CD4-positive, alpha-beta memory T cell (primary cell): ENCODE measurements at regions of chr11 and their contacts with region 1.

Region 1: GRCh38 chr11:73876424-73877300 is at the starts of genes COA4 and PAAF1:
- DNase-seq: peak; percentile 93 to 97 (median 94)
- H3K4me3 ChIP-seq: peak within 1 kb of the TSS; percentile 85 to 90
- H3K4me3 Mint-ChIP-seq: peak within 1 kb of the TSS; percentile 98 to 100 (median 100)
- H3K27ac ChIP-seq: peak within 1 kb of the TSS; percentile 86
- H3K27ac Mint-ChIP-seq: peak within 1 kb of the TSS; percentile 95 to 100 (median 99)
- H3K4me1 ChIP-seq: peaks cover 32% of the 10 kb centered on the region
- H3K4me1 Mint-ChIP-seq: peaks cover 16 to 50% (median 31%) of the 10 kb centered on the region in 4 donors
- H3K27me3 ChIP-seq: no peaks in the 10 kb centered on the region
- H3K27me3 Mint-ChIP-seq: no peaks in the 10 kb centered on the region
- total RNA-seq, gene COA4: 59.0 to 61.4 TPM
- total RNA-seq, gene PAAF1: 18.8 to 19.1 TPM

Region 2: DNA sequence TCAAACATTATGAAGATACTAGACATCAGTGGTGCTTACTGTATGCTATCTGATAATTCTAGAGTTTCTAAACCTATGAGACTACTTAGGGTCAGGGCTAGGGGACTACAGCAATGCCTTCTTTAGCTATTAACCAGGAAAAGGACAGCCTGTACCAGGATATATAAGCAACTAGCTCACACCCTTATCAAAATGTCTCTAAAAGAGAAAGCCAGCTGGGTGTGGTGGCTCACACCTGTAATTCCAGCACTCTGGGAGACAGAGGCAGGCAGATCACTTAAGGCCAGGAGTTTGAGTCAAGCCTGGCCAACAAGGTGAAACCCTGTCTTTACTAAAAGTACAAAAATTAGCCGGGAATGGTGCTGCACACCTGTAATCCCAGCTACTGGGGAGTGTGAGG is 171.6 kb before region 1 on chr11:
- CTCF ChIA-PET with region 1: no interaction called
- POLR2A ChIA-PET with region 1: no interaction called
- intact Hi-C with region 1: no loop called
- DNase-seq: no peak
- H3K4me3 ChIP-seq: no peak overlapping the region
- H3K4me3 Mint-ChIP-seq: no peak overlapping the region
- H3K27ac ChIP-seq: no peak overlapping the region
- H3K27ac Mint-ChIP-seq: no peak overlapping the region
- H3K4me1 ChIP-seq: no peaks in the 10 kb centered on the region
- H3K4me1 Mint-ChIP-seq: peaks cover 0 to 3% (median under 1%) of the 10 kb centered on the region in 4 donors
- H3K27me3 ChIP-seq: no peaks in the 10 kb centered on the region
- H3K27me3 Mint-ChIP-seq: no peaks in the 10 kb centered on the region

Region 3: GRCh38 chr11:73779084-73779902 is 97.4 kb before region 1 on chr11:
- CTCF ChIA-PET with region 1: no interaction called
- POLR2A ChIA-PET with region 1: interaction called, 6 read pairs
- intact Hi-C with region 1: loop called (anchors 1 kb)
- DNase-seq: peak; percentile 97 to 98 (median 98)
- H3K4me3 ChIP-seq: peak overlapping the region; percentile 58 to 62
- H3K4me3 Mint-ChIP-seq: peak overlapping the region; percentile 91 to 97 (median 94)
- H3K27ac ChIP-seq: peak overlapping the region; percentile 90
- H3K27ac Mint-ChIP-seq: peak overlapping the region; percentile 96 to 100 (median 100)
- H3K4me1 ChIP-seq: peaks cover 5% of the 10 kb centered on the region
- H3K4me1 Mint-ChIP-seq: peaks cover 6 to 13% (median 7%) of the 10 kb centered on the region in 4 donors
- H3K27me3 ChIP-seq: no peaks in the 10 kb centered on the region
- H3K27me3 Mint-ChIP-seq: peaks cover 0 to 4% of the 10 kb centered on the region in 2 donors

Region 4: GRCh38 chr11:73800276-73800806 is 76.3 kb before region 1 on chr11:
- CTCF ChIA-PET with region 1: no interaction called
- POLR2A ChIA-PET with region 1: no interaction called
- intact Hi-C with region 1: no loop called
- DNase-seq: no peak
- H3K4me3 ChIP-seq: no peak overlapping the region
- H3K4me3 Mint-ChIP-seq: no peak overlapping the region
- H3K27ac ChIP-seq: no peak overlapping the region
- H3K27ac Mint-ChIP-seq: peak overlapping the region in 1 of 7 donors; percentile 37
- H3K4me1 ChIP-seq: no peaks in the 10 kb centered on the region
- H3K4me1 Mint-ChIP-seq: peaks cover 0 to 9% (median 0%) of the 10 kb centered on the region in 4 donors
- H3K27me3 ChIP-seq: no peaks in the 10 kb centered on the region
- H3K27me3 Mint-ChIP-seq: no peaks in the 10 kb centered on the region

Region 5: DNA sequence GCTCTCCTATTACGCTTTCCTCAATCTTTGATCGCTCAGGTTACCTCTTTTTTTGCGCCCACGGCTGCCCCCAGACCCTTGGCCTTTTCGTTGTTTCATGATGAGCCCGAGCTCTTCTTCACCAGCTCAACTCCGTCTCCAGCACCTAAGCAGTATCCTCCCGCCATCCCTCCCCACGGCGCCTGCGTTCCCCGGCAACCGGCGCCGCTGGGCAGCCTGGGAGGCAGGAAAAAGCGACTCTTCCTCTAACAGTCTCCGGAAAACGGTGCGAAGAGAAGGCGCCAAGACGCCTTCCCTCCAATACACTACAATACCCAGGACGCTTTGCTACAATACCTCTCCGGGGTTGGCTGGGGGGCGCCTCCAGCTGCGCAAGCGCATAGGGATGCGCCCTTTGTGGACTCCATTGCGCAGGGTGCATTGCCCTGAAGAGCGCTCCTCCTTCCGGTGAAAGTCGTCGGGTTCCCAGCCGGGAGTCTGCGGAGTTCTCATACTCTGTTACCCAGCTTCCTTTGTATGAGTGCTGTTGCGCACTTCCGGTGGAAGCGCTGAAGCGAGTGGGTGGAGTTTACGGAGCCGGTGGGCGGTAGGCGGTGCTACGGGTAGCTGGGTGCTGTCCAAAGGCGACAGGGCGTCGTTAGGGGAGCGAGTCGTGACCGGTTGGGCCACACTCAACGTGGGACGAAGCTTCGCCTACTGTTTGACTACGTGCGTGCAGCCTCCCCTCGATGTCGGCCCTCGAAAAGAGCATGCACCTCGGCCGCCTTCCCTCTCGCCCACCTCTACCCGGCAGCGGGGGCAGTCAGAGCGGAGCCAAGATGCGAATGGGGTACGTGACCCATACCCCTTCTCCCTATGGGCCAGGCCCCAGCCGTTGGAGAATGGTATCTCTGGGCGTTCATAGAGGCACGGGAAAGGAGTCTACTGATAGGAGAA is 294.3 kb after region 1 on chr11 and contains the starts of genes C2CD3 and PPME1:
- CTCF ChIA-PET with region 1: no interaction called
- POLR2A ChIA-PET with region 1: interaction called, 5 read pairs
- intact Hi-C with region 1: loop called (anchors 1 kb)
- DNase-seq: peak; percentile 97 to 99 (median 99)
- H3K4me3 ChIP-seq: peak within 1 kb of the TSS; percentile 74 to 86
- H3K4me3 Mint-ChIP-seq: no peak within 1 kb of the TSS
- H3K27ac ChIP-seq: peak within 1 kb of the TSS; percentile 70
- H3K27ac Mint-ChIP-seq: no peak within 1 kb of the TSS
- H3K4me1 ChIP-seq: peaks cover 40% of the 10 kb centered on the region
- H3K4me1 Mint-ChIP-seq: peaks cover 18 to 22% (median 18%) of the 10 kb centered on the region in 4 donors
- H3K27me3 ChIP-seq: no peaks in the 10 kb centered on the region
- H3K27me3 Mint-ChIP-seq: no peaks in the 10 kb centered on the region
- total RNA-seq, gene C2CD3: 41.9 to 52.7 TPM
- total RNA-seq, gene PPME1: 20.7 to 21.9 TPM

Region 6: DNA sequence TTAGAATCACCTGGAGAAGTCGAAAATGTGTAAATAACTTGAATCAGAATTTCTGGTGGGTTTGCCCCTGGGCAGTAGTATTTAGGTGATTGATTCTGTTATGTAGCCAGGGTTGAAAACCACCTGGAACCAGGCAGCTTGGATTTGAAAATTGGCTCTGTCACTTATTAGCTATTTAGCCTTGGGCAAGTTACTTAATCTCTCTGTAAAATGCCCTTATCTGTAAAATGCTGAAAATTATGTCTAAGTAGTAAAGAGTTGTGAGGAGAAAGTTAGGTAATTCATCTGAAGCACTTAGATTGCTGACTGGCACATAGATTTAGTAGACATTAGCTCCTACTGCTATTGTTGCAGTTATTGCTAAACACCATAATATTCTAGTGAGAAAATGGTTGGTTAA is 343.7 kb after region 1 on chr11:
- CTCF ChIA-PET with region 1: no interaction called
- POLR2A ChIA-PET with region 1: no interaction called
- intact Hi-C with region 1: no loop called
- DNase-seq: no peak
- H3K4me3 ChIP-seq: no peak overlapping the region
- H3K4me3 Mint-ChIP-seq: no peak overlapping the region
- H3K27ac ChIP-seq: no peak overlapping the region
- H3K27ac Mint-ChIP-seq: peak overlapping the region in 2 of 7 donors; percentile 1 to 32
- H3K4me1 ChIP-seq: no peaks in the 10 kb centered on the region
- H3K4me1 Mint-ChIP-seq: peaks cover 0 to 2% (median 0%) of the 10 kb centered on the region in 4 donors
- H3K27me3 ChIP-seq: no peaks in the 10 kb centered on the region
- H3K27me3 Mint-ChIP-seq: no peaks in the 10 kb centered on the region